Heart right ventricle (tissue), 16 donors: ENCODE measurements at regions of chr22 and their contacts with region 1.

Region 1: DNA sequence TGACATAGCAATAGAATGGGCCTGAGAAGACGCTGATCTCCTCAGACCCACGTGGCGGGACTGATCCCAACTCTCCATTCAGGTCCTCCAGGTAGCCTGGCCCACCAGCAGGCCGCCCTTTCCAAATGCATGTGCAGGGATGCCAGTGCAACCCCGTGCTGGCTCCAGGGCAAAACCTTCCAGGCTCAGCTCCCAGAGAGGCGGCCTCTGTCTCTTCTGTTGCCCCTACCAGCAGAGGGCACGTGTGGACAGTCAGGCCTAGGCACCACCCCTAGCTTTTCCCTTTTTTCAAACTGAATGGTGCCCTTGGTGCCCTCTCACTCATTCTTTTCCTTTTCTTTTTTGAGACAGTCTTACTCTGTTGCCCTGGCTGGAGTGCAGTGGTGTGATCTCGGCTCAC is 121.7 kb downstream of the OSBP2 start:
- DNase-seq: no peak
- ATAC-seq: no peak
- H3K4me3 ChIP-seq: no peak overlapping the region
- H3K27ac ChIP-seq: no peak overlapping the region
- H3K4me1 ChIP-seq: peaks cover 0 to 3% (median 0%) of the 10 kb centered on the region in 9 donors
- H3K27me3 ChIP-seq: peaks cover 0 to 14% (median 5%) of the 10 kb centered on the region in 7 donors
- CTCF ChIP-seq: no peak

Region 2: DNA sequence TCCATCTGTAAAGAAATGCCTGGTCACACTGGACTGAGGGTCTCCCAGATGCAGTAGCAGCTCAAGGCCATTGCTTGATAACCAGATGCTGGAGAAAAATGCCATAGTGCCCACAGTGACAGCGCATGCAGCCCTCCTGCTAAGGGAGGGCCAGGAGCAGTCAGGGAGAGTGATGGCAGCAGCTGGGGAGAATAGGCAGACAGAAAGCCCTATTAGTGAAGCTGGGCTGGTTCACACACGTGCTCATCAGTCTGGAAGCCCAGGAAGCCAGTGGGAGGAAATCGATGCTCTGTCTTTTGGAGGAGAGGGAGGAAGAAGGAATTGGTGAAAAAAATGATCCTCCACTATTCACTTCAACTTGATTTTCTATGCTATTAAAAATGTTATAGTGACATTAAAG is 38.8 kb before region 1 on chr22:
- intact Hi-C with region 1: no loop called
- DNase-seq: no peak
- ATAC-seq: no peak
- H3K4me3 ChIP-seq: no peak overlapping the region
- H3K27ac ChIP-seq: no peak overlapping the region
- H3K4me1 ChIP-seq: no peaks in the 10 kb centered on the region
- H3K27me3 ChIP-seq: no peaks in the 10 kb centered on the region
- CTCF ChIP-seq: no peak

Region 3: DNA sequence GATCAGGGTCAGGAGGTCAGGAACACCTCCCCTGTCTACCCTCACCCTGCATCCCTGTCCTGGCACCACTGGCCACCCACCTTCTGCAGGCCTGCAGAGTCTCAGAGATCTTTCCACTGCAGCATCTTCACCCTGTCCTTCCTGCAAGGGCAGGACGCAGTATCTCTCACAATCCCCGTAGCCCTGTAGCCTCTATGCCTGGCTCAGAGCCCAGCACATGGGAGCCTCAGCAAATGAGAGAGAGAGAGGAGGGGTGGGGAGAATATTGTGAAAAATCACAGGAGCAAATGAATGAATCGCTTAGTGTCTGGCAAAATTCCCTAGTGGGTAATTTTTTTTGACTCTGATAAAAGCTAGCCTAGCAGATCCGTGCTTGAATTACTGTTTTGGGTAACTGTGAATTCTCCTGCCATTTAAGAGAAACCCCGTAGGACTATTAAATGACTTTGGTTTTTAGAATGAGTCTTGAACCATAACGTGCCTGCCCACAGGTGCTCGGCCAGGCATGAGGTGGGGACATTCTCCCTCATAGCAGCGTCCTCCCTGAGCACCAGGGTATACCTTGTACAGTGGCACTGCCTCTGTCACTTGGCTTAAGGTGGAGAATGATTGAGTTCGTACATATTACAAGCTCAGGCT is 60.6 kb after region 1 on chr22:
- intact Hi-C with region 1: loop called in 1 of 10 experiments (anchors 10 kb)
- DNase-seq: peak; percentile 41 to 49
- ATAC-seq: peak in 6 of 8 donors; percentile 19 to 57 (median 45)
- H3K4me3 ChIP-seq: no peak overlapping the region
- H3K27ac ChIP-seq: peak overlapping the region in 5 of 10 donors; percentile 58 to 74 (median 66)
- H3K4me1 ChIP-seq: peaks cover 4 to 67% (median 46%) of the 10 kb centered on the region in 9 donors
- H3K27me3 ChIP-seq: no peaks in the 10 kb centered on the region
- CTCF ChIP-seq: no peak